ENCODE measurements at regions of chr9 and their contacts with region 1.

Region 1: GRCh38 chr9:130042833-130043653 is at the start of gene FNBP1:
- DNase-seq: peak; percentile 94
- H3K4me3 ChIP-seq: peak within 1 kb of the TSS; percentile 87 to 100 (median 98)
- H3K27ac ChIP-seq: peak within 1 kb of the TSS; percentile 97 to 100 (median 99)
- H3K4me1 ChIP-seq: peaks cover 29 to 64% (median 58%) of the 10 kb centered on the region in 4 donors
- H3K27me3 ChIP-seq: no peaks in the 10 kb centered on the region
- CTCF ChIP-seq: no peak
- EP300 ChIP-seq: no peak
- POLR2A ChIP-seq: peak; percentile 74
- total RNA-seq, gene FNBP1: 177 to 317 (median 254) TPM

Region 2: DNA sequence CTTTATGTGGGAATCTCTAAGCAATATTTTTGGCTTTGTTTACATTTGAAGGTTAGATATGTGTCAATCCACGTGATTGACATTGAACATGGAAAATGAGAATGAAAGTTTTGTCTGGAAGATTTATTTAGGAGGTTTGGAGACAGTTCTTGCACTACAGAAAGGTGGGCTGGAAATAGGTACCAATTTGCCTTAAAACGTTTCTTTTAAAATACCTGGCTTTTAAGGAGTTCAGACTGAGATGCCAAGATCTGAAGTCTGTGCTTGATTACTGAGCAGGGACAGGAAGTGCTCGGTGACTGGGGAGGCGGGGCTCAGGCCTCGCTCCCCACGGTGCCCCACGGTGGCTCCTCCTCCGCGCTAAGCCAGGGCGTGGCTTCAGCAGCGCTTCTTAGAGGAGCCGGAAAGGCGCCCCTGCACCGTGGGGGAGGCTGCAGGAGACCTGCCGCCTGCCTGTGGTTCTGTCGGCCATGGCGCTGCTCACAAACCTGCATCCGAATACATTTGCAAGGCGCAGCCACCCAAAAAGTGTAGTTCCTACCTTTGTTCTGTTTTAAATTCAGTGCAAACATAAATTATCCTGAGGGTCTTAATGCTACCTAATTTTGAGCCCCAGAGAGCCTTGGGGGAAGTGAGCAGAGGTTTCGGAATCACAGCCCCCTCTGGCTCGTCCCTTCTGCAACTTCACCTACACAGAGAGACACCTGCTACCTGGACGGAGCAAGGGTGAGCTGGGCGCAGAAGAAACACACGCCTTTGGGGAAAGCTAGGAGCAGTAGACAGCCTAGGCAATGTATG is 158.6 kb before region 1 on chr9:
- intact Hi-C with region 1: loop called (anchors 2 kb)
- DNase-seq: no peak
- H3K4me3 ChIP-seq: peak overlapping the region; percentile 33 to 54 (median 41)
- H3K27ac ChIP-seq: peak overlapping the region; percentile 86 to 88 (median 86)
- H3K4me1 ChIP-seq: peaks cover 29 to 86% (median 81%) of the 10 kb centered on the region in 4 donors
- H3K27me3 ChIP-seq: no peaks in the 10 kb centered on the region
- CTCF ChIP-seq: peak in 1 of 3 experiments; percentile 15
- EP300 ChIP-seq: no peak
- POLR2A ChIP-seq: no peak

Region 3: GRCh38 chr9:129968690-129969501 is 74.1 kb before region 1 on chr9:
- intact Hi-C with region 1: loop called (anchors 5 kb)
- DNase-seq: no peak
- H3K4me3 ChIP-seq: no peak overlapping the region
- H3K27ac ChIP-seq: peak overlapping the region; percentile 84 to 96 (median 91)
- H3K4me1 ChIP-seq: peaks cover 35 to 86% (median 85%) of the 10 kb centered on the region in 4 donors
- H3K27me3 ChIP-seq: no peaks in the 10 kb centered on the region
- CTCF ChIP-seq: no peak
- EP300 ChIP-seq: no peak
- POLR2A ChIP-seq: no peak

Measured in esophagus muscularis mucosa (tissue), 4 donors.